Activated T-helper 1 cell treated with anti-CD3 and anti-CD28 coated beads, Interleukin-12 subunit alpha, Interleukin-12 subunit beta, Interleukin-2, Interleukin-4 antibody, amounts not matched to agents 30 ng/mL and 10 ng/mL and 1 ng/mL, durations not matched to agents 14 hours and 24 hours and 36 hours (primary cell): ENCODE measurements at regions of chr1 and their contacts with region 1.

Region 1: DNA sequence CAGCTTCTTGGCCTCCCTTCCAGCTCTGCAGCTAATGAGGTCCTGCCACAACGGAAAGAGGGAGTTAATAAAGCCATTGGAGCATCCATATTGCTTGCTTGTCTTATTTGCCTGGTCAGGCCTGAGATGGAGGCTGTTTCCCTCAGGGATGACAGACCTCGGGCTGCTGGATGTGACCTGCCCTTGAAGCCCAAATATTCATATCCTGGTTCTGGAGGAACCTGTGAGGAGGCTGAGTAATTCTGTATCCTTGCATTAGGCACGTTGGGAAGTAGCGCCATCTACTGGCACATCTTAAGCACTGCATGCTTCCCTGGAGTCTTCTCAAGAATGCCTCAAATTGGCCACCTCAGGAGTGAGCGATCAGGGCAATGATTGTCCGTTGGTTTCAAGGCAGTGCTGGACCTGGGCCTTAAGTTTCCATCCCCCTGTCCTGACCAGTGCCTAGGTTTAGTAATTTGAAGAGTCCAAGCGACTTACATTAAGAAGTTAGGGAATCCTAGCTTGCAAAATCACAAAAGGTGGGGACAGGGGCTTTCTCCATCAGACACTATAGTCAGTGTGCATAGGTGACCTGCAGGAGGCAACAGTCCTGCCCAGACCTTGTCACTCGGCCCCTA is 13.8 kb upstream of the NASP start:
- DNase-seq: peak; percentile 57
- H3K4me3 Mint-ChIP-seq: no peak overlapping the region
- H3K27ac Mint-ChIP-seq: no peak overlapping the region
- H3K4me1 Mint-ChIP-seq: peaks cover 9% of the 10 kb centered on the region
- H3K27me3 Mint-ChIP-seq: no peaks in the 10 kb centered on the region

Region 2: DNA sequence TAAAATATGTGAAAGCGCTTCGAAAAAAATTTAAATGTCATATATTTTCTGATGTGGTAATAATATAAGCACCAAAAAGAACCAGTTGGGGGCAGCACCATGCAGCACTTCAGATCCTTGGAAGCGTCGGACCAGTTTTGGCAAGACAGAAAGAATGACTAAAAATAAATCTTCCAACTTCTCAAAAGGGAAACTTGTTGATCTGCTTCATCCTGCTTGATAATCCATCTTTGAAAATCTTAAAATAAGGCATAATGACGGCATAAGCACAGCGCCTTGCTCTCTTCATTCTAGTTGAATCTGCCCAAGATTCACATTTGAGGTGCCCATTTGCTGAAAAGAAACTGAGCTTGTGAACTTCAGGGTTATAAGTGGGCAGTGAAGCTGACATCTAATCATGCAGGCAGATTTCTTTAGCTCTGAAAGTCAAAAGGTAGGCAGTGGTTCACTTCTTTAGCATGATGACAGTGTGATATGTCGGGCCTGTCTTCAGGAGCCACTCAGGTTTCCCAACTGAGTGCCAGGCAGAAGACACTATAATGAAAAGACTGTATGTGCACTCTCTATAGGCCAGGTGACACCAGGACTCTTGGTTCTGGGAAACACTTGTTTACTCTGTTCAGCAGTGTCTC is 210.1 kb before region 1 on chr1:
- intact Hi-C with region 1: loop called (anchors 1 kb)
- DNase-seq: peak; percentile 5
- H3K4me3 Mint-ChIP-seq: no peak overlapping the region
- H3K27ac Mint-ChIP-seq: no peak overlapping the region
- H3K4me1 Mint-ChIP-seq: peaks cover 5% of the 10 kb centered on the region
- H3K27me3 Mint-ChIP-seq: peaks cover 2% of the 10 kb centered on the region

Region 3: GRCh38 chr1:45499415-45499769 is 70.7 kb before region 1 on chr1:
- intact Hi-C with region 1: loop called (anchors 1 kb)
- DNase-seq: no peak
- H3K4me3 Mint-ChIP-seq: peak overlapping the region; percentile 93
- H3K27ac Mint-ChIP-seq: peak overlapping the region; percentile 83
- H3K4me1 Mint-ChIP-seq: peaks cover 37% of the 10 kb centered on the region
- H3K27me3 Mint-ChIP-seq: no peaks in the 10 kb centered on the region

Region 4: DNA sequence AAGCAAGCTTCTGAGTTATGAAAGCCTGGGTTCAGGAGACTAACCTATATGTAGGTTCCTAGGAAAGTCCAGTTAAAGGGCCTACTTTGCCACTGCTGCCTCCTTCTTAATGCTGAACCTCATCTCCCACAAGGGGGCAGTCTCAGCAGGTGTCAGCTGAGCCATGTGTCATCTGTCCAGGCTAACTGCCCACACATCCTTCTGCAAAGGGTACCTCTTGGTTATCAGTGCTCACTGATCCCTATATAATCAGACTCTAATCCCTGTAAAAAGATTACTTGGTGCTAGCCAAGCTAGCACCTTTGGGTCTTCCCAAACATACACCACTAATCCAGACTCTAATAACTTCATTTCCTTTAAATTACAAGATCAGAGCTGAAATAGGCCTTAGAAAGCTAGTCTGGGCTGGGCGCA is 57.4 kb before region 1 on chr1:
- intact Hi-C with region 1: loop called (anchors 1 kb)
- DNase-seq: peak; percentile 43
- H3K4me3 Mint-ChIP-seq: no peak overlapping the region
- H3K27ac Mint-ChIP-seq: peak overlapping the region; percentile 55
- H3K4me1 Mint-ChIP-seq: peaks cover 39% of the 10 kb centered on the region
- H3K27me3 Mint-ChIP-seq: no peaks in the 10 kb centered on the region

Region 5: DNA sequence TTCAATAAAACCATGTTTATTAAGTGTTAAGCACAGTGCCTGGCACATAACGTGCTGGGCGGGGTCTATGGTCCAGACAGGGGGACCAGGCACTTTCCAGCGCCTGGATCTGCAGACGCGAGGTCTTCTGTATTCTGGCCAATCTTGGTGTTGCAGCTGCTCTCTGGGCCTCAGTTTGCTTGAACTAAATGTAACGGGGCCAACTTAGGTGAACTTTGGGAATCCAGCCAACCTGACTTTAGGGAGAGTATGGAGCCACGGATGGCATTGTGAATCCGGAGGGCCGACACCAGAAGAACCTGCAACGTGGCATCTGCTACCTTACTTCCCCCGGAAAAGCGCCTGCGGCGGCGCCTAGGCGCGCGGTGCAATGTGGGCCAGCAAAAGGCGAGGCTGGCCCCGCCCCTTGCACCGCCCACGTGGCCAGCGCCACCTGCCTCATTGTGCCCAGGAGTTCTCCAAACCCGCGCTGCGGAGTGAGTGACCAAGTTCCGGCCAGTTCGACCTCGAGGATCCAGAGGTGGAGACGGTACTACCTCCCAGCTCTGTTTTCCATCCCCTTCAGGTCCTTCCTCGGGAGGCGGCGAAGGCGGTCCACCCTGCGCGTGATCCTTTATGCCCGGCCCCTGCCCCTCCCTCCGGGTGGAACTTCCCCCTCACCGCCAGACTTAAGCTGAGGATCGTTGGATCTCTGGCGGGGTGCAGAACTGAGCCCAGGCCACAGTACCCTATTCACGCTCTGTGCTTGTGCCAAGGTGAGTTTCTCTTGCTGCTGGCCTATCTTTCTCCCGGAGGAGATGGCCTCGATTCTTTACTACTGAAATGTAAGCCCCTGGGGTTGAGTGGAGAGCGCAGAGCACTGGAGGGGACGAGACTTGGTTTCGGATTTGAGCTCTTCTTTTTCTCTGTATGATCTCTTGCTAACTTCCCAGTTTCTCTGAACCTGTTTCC is 19.4 kb before region 1 on chr1 and contains the start of gene AKR1A1:
- intact Hi-C with region 1: loop called (anchors 1 kb)
- DNase-seq: peak; percentile 85
- H3K4me3 Mint-ChIP-seq: peak within 1 kb of the TSS; percentile 93
- H3K27ac Mint-ChIP-seq: peak within 1 kb of the TSS; percentile 92
- H3K4me1 Mint-ChIP-seq: peaks cover 29% of the 10 kb centered on the region
- H3K27me3 Mint-ChIP-seq: peaks cover 5% of the 10 kb centered on the region
- total RNA-seq, gene AKR1A1: 192 and 194 TPM in 2 replicates

Region 6: GRCh38 chr1:45643978-45644377 is 73.9 kb after region 1 on chr1:
- intact Hi-C with region 1: no loop called
- DNase-seq: no peak
- H3K4me3 Mint-ChIP-seq: no peak overlapping the region
- H3K27ac Mint-ChIP-seq: no peak overlapping the region
- H3K4me1 Mint-ChIP-seq: no peaks in the 10 kb centered on the region
- H3K27me3 Mint-ChIP-seq: no peaks in the 10 kb centered on the region